Activated B cell treated with CpG ODN at 0.5 μM for 24 hours (primary cell): ENCODE measurements at regions of chr1 and their contacts with region 1.

Region 1: GRCh38 chr1:248807067-248807737 is 18.5 kb downstream of the SH3BP5L start:
- DNase-seq: peak; percentile 58
- ATAC-seq: peak; percentile 53
- H3K4me3 Mint-ChIP-seq: peak overlapping the region; percentile 24
- H3K27ac Mint-ChIP-seq: peak overlapping the region; percentile 97
- H3K4me1 Mint-ChIP-seq: peaks cover 54% of the 10 kb centered on the region
- H3K27me3 Mint-ChIP-seq: no peaks in the 10 kb centered on the region
- CTCF ChIP-seq: peak; percentile 96

Region 2: DNA sequence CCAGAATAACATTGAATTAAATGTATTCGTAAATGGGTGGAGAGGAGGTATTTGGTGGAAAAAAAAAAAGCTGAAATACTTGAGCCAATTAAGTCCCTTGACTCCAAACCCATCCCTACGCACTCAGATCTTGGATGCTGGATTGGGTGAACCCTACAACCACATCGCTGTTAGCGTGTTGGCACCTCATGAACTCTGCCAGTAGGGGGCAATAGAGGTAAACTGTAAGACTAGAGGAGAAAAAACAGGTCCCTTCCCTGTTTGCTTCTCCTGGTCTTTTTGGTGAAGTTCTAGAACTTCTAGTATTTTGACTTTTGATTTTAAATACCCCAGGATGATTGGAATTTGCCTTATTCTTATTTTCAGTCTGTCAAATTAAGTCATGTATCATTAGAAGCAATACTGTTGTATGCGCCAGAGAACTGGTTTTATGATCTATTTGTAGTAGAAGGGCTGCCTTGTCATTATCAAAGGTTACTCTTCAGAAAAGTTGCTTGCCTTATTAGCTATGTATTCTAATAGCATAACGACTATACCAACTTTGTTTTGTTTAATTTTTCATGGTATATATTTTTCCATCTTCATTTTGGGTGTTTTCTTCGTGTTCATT is 1125.8 kb before region 1 on chr1:
- CTCF ChIA-PET with region 1: no interaction called
- POLR2A ChIA-PET with region 1: no interaction called
- intact Hi-C with region 1: loop called (anchors 5 kb)
- DNase-seq: no peak
- ATAC-seq: peak; percentile 37
- H3K4me3 Mint-ChIP-seq: no peak overlapping the region
- H3K27ac Mint-ChIP-seq: no peak overlapping the region
- H3K4me1 Mint-ChIP-seq: peaks cover 1% of the 10 kb centered on the region
- H3K27me3 Mint-ChIP-seq: peaks cover 2% of the 10 kb centered on the region
- CTCF ChIP-seq: no peak

Region 3: GRCh38 chr1:248243204-248243603 is 564.0 kb before region 1 on chr1:
- CTCF ChIA-PET with region 1: interaction called, 14 read pairs
- POLR2A ChIA-PET with region 1: no interaction called
- intact Hi-C with region 1: loop called (anchors 1 kb)
- DNase-seq: no peak
- ATAC-seq: no peak
- H3K4me3 Mint-ChIP-seq: no peak overlapping the region
- H3K27ac Mint-ChIP-seq: no peak overlapping the region
- H3K4me1 Mint-ChIP-seq: peaks cover 2% of the 10 kb centered on the region
- H3K27me3 Mint-ChIP-seq: peaks cover 12% of the 10 kb centered on the region
- CTCF ChIP-seq: no peak

Region 4: GRCh38 chr1:248622570-248623001 is 184.6 kb before region 1 on chr1:
- CTCF ChIA-PET with region 1: interaction called, 218 read pairs
- POLR2A ChIA-PET with region 1: interaction called, 26 read pairs
- intact Hi-C with region 1: loop called (anchors 1 kb)
- DNase-seq: no peak
- ATAC-seq: peak; percentile 97
- H3K4me3 Mint-ChIP-seq: no peak overlapping the region
- H3K27ac Mint-ChIP-seq: peak overlapping the region; percentile 84
- H3K4me1 Mint-ChIP-seq: peaks cover 12% of the 10 kb centered on the region
- H3K27me3 Mint-ChIP-seq: no peaks in the 10 kb centered on the region
- CTCF ChIP-seq: no peak

Region 5: GRCh38 chr1:248696261-248696660 is 110.9 kb before region 1 on chr1:
- CTCF ChIA-PET with region 1: interaction called, 41 read pairs
- POLR2A ChIA-PET with region 1: interaction called, 10 read pairs
- intact Hi-C with region 1: loop called (anchors 2 kb)
- DNase-seq: no peak
- ATAC-seq: no peak
- H3K4me3 Mint-ChIP-seq: no peak overlapping the region
- H3K27ac Mint-ChIP-seq: peak overlapping the region; percentile 61
- H3K4me1 Mint-ChIP-seq: peaks cover 16% of the 10 kb centered on the region
- H3K27me3 Mint-ChIP-seq: no peaks in the 10 kb centered on the region
- CTCF ChIP-seq: no peak

Region 6: DNA sequence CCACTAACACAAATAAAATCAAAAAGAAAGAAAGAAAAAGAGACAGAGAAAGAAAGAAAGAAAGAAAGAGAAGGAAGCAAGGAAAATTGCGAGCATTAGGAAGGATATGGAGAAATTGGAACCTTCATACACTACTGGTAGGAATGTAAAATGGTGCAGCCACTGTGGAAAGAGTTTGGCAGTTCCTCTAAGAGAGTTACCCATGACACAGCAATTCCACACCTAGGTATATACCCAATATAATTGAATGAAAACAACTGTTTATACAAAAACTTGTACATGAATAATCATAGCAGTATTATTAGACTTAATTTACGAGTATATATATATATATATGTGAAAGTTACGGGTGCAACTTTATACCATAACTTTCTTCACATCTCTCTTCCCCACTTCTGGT is 47.6 kb before region 1 on chr1:
- CTCF ChIA-PET with region 1: no interaction called
- POLR2A ChIA-PET with region 1: no interaction called
- intact Hi-C with region 1: no loop called
- DNase-seq: no peak
- ATAC-seq: no peak
- H3K4me3 Mint-ChIP-seq: no peak overlapping the region
- H3K27ac Mint-ChIP-seq: no peak overlapping the region
- H3K4me1 Mint-ChIP-seq: no peaks in the 10 kb centered on the region
- H3K27me3 Mint-ChIP-seq: no peaks in the 10 kb centered on the region
- CTCF ChIP-seq: no peak

Region 7: GRCh38 chr1:248786156-248786555 is 21.0 kb before region 1 on chr1:
- CTCF ChIA-PET with region 1: interaction called, 20 read pairs
- POLR2A ChIA-PET with region 1: interaction called, 22 read pairs
- intact Hi-C with region 1: no loop called
- DNase-seq: no peak
- ATAC-seq: peak; percentile 64
- H3K4me3 Mint-ChIP-seq: no peak overlapping the region
- H3K27ac Mint-ChIP-seq: no peak overlapping the region
- H3K4me1 Mint-ChIP-seq: peaks cover 46% of the 10 kb centered on the region
- H3K27me3 Mint-ChIP-seq: no peaks in the 10 kb centered on the region
- CTCF ChIP-seq: no peak

Region 8: DNA sequence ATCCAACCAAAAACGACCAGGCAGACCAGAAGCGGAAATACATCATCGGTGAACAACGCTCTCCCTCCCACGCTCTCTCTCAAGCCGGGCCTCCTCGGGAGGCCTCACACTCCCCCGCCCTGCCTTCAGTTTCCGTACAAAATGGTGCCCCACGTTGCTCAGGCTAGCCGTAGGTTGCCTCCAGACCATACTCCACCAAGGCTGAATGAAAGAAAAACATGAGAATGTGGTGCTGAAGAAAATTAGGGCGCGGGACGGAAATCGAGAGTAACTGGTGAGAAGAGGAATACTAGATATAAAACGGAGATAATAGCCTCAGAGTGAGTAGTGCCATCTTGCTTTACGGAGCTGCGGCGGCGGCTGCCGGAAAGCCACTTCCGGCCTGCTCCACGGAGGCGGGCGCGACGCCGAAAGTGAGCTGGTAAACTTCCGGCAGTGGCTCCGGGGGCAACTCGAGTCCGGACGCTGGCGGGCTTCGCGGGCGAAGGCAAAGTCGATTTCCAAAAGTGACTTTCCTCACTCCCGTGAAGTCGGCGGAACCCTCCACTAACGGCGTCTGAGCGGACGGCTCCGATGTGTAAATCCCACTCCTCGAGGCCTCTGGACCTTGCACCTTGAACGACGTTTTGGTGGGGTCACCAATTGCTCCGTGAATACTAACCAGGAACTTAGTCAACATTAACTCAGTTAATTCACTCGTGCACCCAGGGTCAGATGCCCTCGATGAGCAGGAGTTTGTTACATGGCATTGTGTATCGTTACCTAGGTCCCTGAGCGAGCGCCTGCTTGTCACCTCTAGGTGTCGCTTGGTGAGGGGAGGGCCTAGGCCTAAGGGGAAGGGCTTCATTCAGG is 18.9 kb after region 1 on chr1 and contains the start of gene SH3BP5L:
- CTCF ChIA-PET with region 1: interaction called, 14 read pairs
- POLR2A ChIA-PET with region 1: interaction called, 10 read pairs
- intact Hi-C with region 1: no loop called
- DNase-seq: peak; percentile 78
- ATAC-seq: peak; percentile 84
- H3K4me3 Mint-ChIP-seq: peak within 1 kb of the TSS; percentile 93
- H3K27ac Mint-ChIP-seq: peak within 1 kb of the TSS; percentile 97
- H3K4me1 Mint-ChIP-seq: peaks cover 56% of the 10 kb centered on the region
- H3K27me3 Mint-ChIP-seq: no peaks in the 10 kb centered on the region
- CTCF ChIP-seq: no peak
- total RNA-seq, gene SH3BP5L: 26.3 and 27.3 TPM in 2 replicates